Common myeloid progenitor, CD34-positive (primary cell): ENCODE measurements at regions of chr3 and their contacts with region 1.

Region 1: GRCh38 chr3:128794770-128795649 is 69.0 kb downstream of the RAB7A start:
- DNase-seq: peak; percentile 63 to 75 (median 72)
- H3K4me3 ChIP-seq: no peak overlapping the region
- H3K27ac ChIP-seq: no peak overlapping the region
- H3K4me1 ChIP-seq: peaks cover 11 to 45% (median 31%) of the 10 kb centered on the region in 4 experiments
- H3K27me3 ChIP-seq: no peaks in the 10 kb centered on the region

Region 2: DNA sequence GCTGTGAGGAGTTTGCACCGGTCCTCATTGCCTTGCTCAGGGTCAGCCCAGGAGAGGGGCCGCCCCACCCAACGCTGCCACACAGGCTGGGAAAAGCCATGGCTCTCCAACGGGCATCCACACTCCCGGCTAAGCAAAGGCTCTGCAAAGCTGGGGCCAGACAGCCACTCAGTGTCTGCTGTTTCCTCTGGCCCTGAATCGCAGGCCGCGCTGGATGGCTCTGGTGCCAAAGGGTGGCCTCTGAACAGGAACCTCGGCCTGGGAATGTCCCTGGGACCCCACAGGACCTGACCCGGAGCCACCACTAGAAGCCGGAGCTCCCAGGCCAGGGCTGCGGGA is 187.3 kb before region 1 on chr3:
- CTCF ChIA-PET with region 1: no interaction called
- POLR2A ChIA-PET with region 1: no interaction called
- DNase-seq: no peak
- H3K4me3 ChIP-seq: peak overlapping the region; percentile 23 to 76 (median 54)
- H3K27ac ChIP-seq: no peak overlapping the region
- H3K4me1 ChIP-seq: peaks cover 7 to 63% (median 29%) of the 10 kb centered on the region in 4 experiments
- H3K27me3 ChIP-seq: no peaks in the 10 kb centered on the region

Region 3: GRCh38 chr3:128780101-128780837 is 14.7 kb before region 1 on chr3:
- CTCF ChIA-PET with region 1: interaction called, 22 read pairs
- POLR2A ChIA-PET with region 1: no interaction called
- DNase-seq: no peak
- H3K4me3 ChIP-seq: no peak overlapping the region
- H3K27ac ChIP-seq: no peak overlapping the region
- H3K4me1 ChIP-seq: peaks cover 0 to 33% (median 17%) of the 10 kb centered on the region in 4 experiments
- H3K27me3 ChIP-seq: no peaks in the 10 kb centered on the region